Uterus (tissue), 4 donors: ENCODE measurements at regions of chr11 and their contacts with region 1.

Region 1: DNA sequence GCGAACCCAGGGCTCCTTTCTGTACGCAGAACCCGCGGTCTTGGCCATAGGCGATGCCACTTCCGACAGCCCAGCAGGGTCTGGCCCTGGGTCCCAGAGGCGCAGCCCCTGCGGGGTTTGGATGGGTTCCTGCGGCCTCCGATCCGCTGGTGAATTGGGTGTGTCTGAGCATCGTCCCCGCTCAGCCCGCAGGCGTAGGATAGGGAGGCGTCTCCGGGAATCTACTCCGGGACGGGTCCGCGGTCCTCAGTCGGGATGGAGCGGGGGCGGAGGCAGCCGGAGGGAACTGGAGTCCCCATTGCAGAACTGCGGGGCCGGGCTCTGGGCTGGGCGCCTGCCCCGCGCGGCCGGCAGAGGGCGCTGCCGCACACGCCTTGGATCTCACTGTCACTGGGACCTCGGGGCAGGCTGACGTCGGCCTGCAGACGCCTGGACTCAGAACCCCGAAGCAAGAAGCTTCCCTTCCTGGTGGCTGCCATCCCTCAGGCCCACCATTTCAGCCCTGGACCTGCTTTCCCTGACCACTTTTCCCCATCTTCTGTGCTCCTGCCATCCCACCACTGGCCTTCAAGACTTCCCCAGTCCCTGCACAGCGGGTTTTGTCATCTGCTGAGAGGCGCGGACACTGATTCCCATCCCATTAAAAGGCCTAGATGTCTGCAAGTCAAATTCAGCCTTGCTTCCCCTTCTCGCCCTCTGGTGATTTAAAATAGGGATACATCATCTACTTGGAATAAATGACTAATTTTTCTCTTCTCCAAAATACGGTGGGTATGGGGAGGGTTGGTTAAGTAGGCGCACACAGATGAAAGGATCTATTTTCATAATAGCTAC is 38.3 kb upstream of the CREB3L1 start:
- DNase-seq: peak; percentile 85 to 92
- H3K4me3 ChIP-seq: peak overlapping the region; percentile 14 to 52
- H3K27ac ChIP-seq: peak overlapping the region; percentile 84 to 89
- H3K4me1 ChIP-seq: no peaks in the 10 kb centered on the region
- H3K27me3 ChIP-seq: no peaks in the 10 kb centered on the region
- CTCF ChIP-seq: peak; percentile 99 to 100 (median 99)
- POLR2A ChIP-seq: peak in 1 of 2 donors; percentile 40

Region 2: DNA sequence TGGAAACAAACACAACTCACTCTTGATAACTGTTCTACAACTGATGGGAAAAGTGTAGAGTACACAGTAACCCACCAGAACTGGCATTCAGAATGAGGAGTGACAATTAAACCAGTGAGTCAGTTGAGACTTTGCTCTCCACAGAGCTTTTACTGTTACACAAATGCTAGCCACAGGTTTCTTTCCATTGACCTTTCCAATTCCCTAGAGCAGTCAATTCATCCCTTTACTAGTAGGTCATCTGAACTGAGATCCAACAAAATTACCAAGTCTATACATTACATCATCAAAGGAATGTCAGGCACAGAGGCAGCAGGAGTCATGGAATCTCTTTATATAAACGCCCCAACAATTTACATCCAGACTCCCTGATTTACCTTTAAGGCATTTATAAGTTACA is 183.8 kb before region 1 on chr11:
- intact Hi-C with region 1: no loop called
- DNase-seq: no peak
- H3K4me3 ChIP-seq: no peak overlapping the region
- H3K27ac ChIP-seq: no peak overlapping the region
- H3K4me1 ChIP-seq: no peaks in the 10 kb centered on the region
- H3K27me3 ChIP-seq: no peaks in the 10 kb centered on the region
- CTCF ChIP-seq: no peak
- POLR2A ChIP-seq: no peak

Region 3: GRCh38 chr11:46259971-46260560 is 20.9 kb after region 1 on chr11:
- intact Hi-C with region 1: no loop called
- DNase-seq: no peak
- H3K4me3 ChIP-seq: no peak overlapping the region
- H3K27ac ChIP-seq: no peak overlapping the region
- H3K4me1 ChIP-seq: no peaks in the 10 kb centered on the region
- H3K27me3 ChIP-seq: no peaks in the 10 kb centered on the region
- CTCF ChIP-seq: no peak
- POLR2A ChIP-seq: no peak

Region 4: DNA sequence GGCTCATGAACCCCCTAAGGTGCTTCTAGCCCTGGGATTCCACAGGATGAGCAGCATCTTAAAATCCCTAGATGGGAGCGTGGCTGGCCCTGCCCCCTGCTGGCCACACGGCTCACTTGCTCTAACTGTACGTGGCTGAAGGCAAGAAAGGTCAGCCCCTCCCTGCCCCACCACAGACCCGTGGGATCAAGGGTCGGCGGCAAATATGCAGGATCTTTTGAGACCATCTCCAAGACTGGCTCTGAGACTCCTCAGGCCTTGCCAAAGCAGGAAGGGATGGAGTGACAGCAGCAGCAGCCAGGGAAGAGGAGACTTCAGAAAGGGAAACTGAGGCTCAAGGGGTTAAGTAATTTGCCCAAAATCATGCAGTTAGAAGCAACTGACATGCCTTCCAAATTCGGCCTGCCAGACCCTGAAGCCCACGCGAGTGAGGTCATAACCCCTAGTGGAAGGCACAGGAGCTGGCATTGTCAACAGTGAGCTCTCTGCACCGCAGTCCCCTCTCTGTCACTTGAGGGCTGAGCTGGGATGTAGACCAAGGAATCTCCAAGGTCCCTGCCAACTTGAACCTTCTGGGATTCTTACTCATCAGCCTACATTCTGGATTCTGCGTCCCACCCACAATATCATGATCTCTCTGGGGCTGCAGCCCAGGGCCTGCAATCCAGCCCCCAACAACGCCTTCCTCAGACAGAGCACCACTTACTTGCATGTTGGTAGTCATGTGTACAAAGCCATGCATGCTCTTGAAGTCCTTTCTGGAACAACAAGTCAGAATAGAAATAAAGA is 69.6 kb after region 1 on chr11:
- intact Hi-C with region 1: loop called (anchors 2 kb)
- DNase-seq: peak; percentile 77 to 83
- H3K4me3 ChIP-seq: no peak overlapping the region
- H3K27ac ChIP-seq: no peak overlapping the region
- H3K4me1 ChIP-seq: no peaks in the 10 kb centered on the region
- H3K27me3 ChIP-seq: no peaks in the 10 kb centered on the region
- CTCF ChIP-seq: peak; percentile 86 to 96 (median 90)
- POLR2A ChIP-seq: no peak